HEK293 (cell line): ENCODE measurements at regions of chr7 and their contacts with region 1.

Region 1: DNA sequence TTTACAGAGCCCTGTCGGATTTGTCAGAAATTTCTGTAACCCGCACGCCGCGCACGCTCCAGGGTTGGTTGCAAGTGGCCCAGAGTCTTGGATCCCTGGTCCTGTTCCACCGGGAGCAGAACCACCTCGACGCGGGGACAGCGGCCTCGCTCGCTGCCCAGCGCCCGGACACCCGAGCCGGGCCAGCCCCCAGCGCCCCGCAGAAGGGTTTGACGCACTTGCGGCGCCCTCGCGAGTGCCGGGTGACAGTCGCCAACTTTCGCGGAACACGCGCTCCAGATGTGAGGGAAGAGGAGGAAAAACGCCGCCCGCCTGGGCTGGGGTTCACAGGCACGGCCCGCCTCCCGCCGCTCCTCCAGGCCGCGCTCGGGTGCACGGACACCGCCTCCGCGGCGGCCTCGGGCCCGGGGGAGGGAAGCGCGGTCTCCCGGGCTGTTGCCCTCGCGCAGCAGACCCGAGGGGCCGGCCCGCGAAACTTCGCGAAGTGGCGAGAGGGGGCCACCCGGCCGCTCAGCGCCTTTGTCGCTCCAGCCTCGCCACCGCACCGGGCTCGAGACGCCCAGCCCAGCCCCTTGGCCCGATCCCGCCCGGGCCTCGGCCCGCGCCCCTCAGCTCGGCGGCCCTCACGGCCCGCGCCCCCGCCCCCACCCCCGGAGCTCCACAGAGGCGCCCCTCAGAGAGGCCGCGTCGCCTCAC is 514 bp downstream of the RNF216 start:
- H3K4me3 ChIP-seq: peak overlapping the region; percentile 94
- H3K27ac ChIP-seq: peak overlapping the region; percentile 80
- H3K4me1 ChIP-seq: peaks cover 8% of the 10 kb centered on the region
- CTCF ChIP-seq: no peak

Region 2: GRCh38 chr7:5767066-5767465 is 13.9 kb before region 1 on chr7:
- CTCF ChIA-PET with region 1: interaction called, 12 read pairs
- POLR2A ChIA-PET with region 1: interaction called, 7 read pairs
- H3K4me3 ChIP-seq: no peak overlapping the region
- H3K27ac ChIP-seq: no peak overlapping the region
- H3K4me1 ChIP-seq: peaks cover 10% of the 10 kb centered on the region; the same call in 1 of the 2 replicates
- CTCF ChIP-seq: no peak

Region 3: DNA sequence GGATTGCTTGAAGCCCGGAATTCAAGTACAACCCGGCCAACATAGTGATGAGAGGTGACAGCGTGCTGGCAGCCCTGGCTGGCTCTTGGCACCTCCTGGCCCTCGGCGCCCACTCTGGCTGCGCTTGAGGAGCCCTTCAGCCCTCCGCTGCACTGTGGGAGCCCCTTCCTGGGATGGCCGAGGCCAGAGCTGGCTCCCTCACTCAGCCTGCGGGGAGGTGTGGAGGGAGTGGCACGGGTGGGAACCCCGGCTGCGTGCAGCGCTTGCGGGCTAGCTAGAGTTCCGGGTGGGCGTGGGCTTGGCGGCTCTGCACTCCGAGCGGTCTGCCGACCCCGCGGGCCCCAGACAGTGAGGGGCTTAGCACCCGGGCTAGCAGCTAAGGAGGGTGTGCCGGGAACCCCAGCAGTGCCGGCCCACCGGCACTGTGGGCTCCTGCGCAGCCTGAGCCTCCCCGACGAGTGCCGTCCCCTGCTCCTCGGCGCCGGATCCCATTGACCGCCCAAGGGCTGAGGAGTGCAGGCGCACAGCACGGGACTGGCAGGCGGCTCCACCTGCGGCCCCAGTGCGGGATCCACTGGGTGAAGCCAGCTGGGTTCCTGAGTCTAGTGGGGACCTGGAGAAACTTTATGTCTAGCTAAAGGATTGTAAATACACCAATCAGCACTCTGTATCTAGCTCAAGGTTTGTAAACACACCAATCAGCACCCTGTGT is 12.6 kb after region 1 on chr7:
- CTCF ChIA-PET with region 1: interaction called, 17 read pairs
- POLR2A ChIA-PET with region 1: interaction called, 4 read pairs
- H3K4me3 ChIP-seq: no peak overlapping the region
- H3K27ac ChIP-seq: no peak overlapping the region
- H3K4me1 ChIP-seq: 0 out of 2 replicates have a peak, but pooled peaks cover 4% of the 10 kb centered on the region
- CTCF ChIP-seq: no peak